A549 (cell line): ENCODE measurements at regions of chr10 and their contacts with region 1.

Region 1: DNA sequence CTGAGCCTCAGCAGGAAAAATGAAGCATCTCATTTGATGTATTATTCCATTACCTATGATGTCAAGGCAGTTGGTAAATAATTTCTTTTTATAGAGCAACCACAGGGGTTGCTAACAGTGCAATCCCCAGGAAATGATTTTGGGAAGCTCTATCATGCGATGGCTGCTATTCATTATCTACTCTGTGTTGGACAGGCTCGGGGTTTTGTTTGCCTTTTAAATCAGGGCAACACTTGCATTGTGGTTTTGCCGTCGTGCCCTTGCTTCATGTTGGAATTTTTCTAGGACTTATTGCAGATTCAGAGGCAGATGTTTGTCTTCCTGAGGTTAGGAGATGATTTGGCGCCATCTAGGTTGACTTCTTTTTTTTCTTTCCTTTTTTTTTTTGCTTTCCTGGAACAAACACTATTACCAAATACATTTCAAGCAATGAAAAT is 128.4 kb downstream of the BICC1 start:
- DNase-seq: peak; percentile 65 to 94
- ATAC-seq: peak; percentile 76 to 87
- H3K4me3 ChIP-seq: no peak overlapping the region; the same call in 2 of the 3 replicates
- H3K27ac ChIP-seq: peak overlapping the region; percentile 83 to 90
- H3K4me1 ChIP-seq: peaks cover 86% of the 10 kb centered on the region
- CTCF ChIP-seq: peak; percentile 78
- EP300 ChIP-seq: peak; percentile 86 to 96; a peak in 4 of 5 replicates
- POLR2A ChIP-seq: no peak
- RAD21 ChIP-seq: peak; percentile 84 to 87

Region 2: DNA sequence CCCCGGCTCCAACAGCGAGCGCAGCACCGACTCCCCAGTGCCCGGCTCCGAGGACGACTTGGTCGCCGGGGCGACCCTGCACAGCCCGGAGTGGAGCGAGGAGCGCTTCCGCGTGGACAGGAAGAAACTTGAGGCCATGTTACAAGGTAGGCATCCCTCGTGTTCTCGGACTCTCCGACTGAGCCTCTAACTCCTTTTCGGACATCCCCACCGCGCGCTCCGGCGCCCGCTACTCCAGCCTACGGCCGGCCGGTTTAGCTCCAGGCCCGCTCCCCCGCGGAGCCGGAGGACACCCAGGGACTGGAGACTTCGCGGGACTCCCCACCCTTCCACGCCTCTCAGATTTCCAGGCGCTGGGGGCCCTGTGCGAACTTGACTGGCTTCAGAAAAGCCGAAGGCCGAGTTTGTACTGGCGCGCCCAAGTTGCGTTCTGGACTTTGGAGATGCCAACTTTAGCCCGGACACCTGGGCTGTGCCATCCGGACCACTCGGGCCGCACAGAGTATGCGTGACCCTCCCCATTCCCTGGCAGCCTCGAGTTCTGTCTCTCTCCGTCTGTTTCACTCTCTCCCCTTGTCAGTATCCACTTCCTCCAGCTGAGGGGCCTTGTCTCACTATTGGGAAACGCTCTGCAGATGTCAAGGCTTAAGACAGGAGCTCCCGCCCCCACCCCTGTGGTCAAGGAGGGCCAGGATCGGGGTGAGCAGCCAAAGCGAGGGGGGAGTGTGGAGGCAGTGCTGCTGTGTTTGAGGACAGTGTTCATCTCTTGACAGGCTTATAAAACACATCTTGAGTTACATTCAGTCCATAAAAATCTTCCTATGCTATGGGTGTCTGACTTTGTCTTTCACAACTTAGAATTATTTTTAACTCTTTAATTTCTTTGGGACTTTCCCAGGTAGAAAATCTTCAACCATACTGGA is 127.7 kb before region 1 on chr10:
- CTCF ChIA-PET with region 1: interaction called, 15 read pairs
- POLR2A ChIA-PET with region 1: interaction called, 34 read pairs
- DNase-seq: peak; percentile 69 to 87
- ATAC-seq: peak; percentile 69 to 80
- H3K4me3 ChIP-seq: peak overlapping the region; percentile 69
- H3K27ac ChIP-seq: peak overlapping the region; percentile 91 to 99
- H3K4me1 ChIP-seq: peaks cover 24% of the 10 kb centered on the region
- CTCF ChIP-seq: no peak
- EP300 ChIP-seq: 0 out of 5 replicates have a peak, but pooled peaks of 1 of the 2 experiments have one; percentile 15
- POLR2A ChIP-seq: 0 out of 2 replicates have a peak, but pooled peaks have one; percentile 15
- RAD21 ChIP-seq: peak in 1 of 2 experiments; percentile 17; a peak in 2 of 5 replicates

Region 3: DNA sequence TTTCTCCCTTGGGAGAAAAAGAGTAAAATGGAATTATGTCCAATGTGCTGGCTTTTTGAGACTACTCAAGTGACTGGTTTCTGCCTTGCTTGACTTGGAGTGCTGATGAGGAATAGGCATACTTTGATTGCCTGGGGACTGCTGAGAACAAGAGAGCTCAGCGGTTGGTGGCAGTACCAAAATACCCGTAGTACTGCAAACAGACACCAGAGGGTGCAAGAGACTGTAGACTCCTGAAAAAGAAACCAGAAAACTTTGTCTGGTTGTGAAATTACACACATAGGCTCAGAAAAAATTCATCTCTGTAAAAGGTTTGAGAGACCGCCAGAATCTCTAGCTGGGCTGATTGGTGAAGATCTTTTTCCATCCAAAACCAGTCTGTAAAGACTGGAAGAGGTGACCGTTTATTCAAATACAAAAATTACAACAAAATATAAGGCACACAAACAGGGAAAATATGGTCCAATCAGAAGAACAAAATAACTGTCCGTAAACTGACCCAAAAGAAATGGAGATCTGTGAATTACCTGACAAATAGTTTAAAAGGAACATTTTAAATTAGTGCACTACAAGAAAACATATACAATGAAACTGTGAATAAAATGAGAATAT is 109.9 kb before region 1 on chr10:
- CTCF ChIA-PET with region 1: interaction called, 40 read pairs
- POLR2A ChIA-PET with region 1: no interaction called
- DNase-seq: peak in 1 of 2 experiments; percentile 64
- ATAC-seq: peak in 1 of 2 experiments; percentile 78; a peak in 3 of 6 replicates
- H3K4me3 ChIP-seq: no peak overlapping the region
- H3K27ac ChIP-seq: peak overlapping the region in 1 of 2 experiments; percentile 23; a peak in 1 of 6 replicates
- H3K4me1 ChIP-seq: no peaks in the 10 kb centered on the region
- CTCF ChIP-seq: peak; percentile 50
- EP300 ChIP-seq: no peak
- POLR2A ChIP-seq: no peak
- RAD21 ChIP-seq: peak; percentile 66 to 79

Region 4: GRCh38 chr10:58565271-58565670 is 75.8 kb before region 1 on chr10:
- CTCF ChIA-PET with region 1: no interaction called
- POLR2A ChIA-PET with region 1: no interaction called
- DNase-seq: no peak
- ATAC-seq: no peak
- H3K4me3 ChIP-seq: no peak overlapping the region
- H3K27ac ChIP-seq: peak overlapping the region in 1 of 2 experiments; percentile 50; a peak in 1 of 6 replicates
- H3K4me1 ChIP-seq: 0 out of 3 replicates have a peak, but pooled peaks cover 10% of the 10 kb centered on the region
- CTCF ChIP-seq: no peak
- EP300 ChIP-seq: no peak
- POLR2A ChIP-seq: no peak
- RAD21 ChIP-seq: no peak